Activated naive CD4-positive, alpha-beta T cell treated with anti-CD3 and anti-CD28 coated beads, Interleukin-2, amount 10 ng/mL, durations not matched to agents 7 days and 5 days (primary cell): ENCODE measurements at regions of chr19 and their contacts with region 1.

Region 1: DNA sequence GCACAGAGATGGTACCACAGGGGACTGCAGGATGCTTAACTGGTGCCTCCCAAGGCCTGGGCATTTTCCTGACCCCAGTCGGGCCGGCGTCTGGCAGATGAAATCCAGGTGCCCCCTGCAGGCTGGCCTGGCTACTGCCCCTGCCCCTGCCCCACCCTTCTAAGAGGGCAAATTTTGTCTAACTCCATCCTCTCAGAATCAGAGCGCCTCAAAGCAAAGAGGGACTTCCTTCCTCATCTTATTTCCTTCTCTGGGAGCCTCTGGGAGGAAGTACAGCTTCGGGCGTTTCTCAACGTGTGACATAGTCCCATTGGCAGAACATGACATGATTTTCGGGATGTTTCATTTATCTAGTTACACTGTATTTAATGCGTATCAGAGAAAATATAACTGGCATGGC is 2.7 kb downstream of the PRKACA start:
- DNase-seq: peak; percentile 69
- H3K4me3 Mint-ChIP-seq: no peak overlapping the region
- H3K27ac Mint-ChIP-seq: no peak overlapping the region
- H3K4me1 Mint-ChIP-seq: peaks cover 61% of the 10 kb centered on the region
- H3K27me3 Mint-ChIP-seq: no peaks in the 10 kb centered on the region

Region 2: GRCh38 chr19:14073261-14073924 is 41.5 kb before region 1 on chr19:
- CTCF ChIA-PET with region 1: interaction called, 22 read pairs
- DNase-seq: peak; percentile 81
- H3K4me3 Mint-ChIP-seq: peak overlapping the region; percentile 91
- H3K27ac Mint-ChIP-seq: peak overlapping the region; percentile 85
- H3K4me1 Mint-ChIP-seq: peaks cover 32% of the 10 kb centered on the region
- H3K27me3 Mint-ChIP-seq: peaks cover 59% of the 10 kb centered on the region